ENCODE measurements at regions of chr7 and their contacts with region 1.

Region 1: DNA sequence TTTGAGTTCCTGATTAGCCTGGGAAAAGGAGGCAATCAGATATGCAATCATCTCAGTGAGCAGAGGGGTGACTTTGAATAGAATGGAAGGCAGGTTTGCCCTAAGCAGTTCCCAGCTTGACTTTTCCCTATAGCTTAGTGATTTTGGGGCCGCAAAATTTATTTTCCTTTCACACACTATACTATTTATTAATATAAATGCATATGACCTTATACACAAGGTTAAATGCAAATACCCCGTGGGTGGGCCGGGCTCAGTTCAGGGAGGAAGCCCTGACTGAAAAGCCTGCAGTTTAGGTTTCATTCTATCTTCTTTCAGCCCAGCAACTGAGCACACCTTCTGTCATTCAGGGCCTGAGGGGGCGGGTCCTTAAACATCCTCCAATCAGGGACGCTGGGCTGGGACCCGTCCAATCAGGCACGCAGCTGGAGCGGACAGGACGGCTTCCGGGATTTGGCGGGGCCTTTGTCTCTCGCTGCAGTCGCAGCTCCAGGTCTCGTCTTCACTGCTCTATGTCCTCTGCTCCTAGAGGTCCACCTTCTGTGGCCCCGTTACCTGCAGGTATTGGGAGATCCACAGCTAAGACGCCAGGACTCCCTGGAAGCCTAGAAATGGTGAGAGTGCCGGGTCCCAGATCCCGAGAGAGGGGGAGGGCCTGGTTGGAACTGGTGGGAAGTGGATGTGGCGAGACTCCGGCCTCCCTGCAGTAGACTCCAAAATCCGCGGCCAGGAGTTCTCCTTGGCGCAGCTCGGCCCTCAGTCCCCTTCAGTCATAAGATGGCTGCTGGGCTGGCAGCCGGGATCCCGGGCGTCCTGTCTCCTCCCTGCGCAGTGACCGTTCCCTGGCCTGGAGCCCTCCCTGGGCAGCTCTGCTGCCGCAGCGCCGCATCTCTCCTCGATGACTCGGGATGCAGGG is at the start of gene ZNF273:
- DNase-seq: peak; percentile 87
- H3K4me3 Mint-ChIP-seq: peak within 1 kb of the TSS; percentile 97
- H3K27ac Mint-ChIP-seq: peak within 1 kb of the TSS; percentile 93
- H3K4me1 Mint-ChIP-seq: peaks cover 26% of the 10 kb centered on the region
- H3K27me3 Mint-ChIP-seq: no peaks in the 10 kb centered on the region
- total RNA-seq, gene ZNF273: 7.2 and 7.5 TPM in 2 replicates

Region 2: DNA sequence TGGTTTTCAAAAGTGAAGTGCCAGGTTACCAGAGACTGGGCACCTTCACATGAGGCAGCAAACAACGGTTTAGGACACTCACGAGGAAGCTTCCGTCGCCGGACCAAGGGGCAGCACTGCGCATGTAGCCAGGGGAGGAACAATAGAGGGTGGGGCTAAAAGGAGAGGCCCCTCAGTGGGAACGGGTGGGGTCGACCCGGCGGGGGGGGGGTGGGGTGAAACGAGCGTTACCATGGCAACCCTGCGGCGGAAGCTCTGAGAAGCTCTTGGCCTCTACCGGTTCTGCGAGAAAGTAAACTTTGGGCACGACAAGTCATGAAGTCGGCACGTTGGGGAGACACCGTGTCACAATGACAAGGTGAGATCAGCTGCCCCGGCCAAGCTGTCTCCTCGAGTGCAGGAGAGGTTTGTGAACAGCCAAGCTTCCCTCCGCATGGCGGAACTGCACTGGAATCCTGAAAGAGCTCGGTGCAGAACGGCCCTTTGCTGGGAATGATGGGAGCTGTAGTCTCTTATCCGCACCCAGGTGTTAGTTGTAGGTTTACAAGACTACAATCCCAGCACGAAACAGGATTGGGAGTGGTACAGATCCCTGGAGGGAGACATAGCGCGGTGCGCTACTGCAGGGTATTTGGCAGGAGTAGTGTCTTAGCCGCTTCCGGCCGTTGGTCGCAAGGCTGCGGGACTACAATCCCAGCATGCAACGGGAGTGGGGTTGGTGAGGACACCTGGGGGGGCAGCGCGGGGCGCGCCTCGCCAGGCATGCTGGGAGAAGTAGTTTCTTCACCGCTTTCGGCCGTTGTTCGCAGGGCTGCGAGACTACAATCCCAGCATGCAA is 977.2 kb before region 1 on chr7:
- intact Hi-C with region 1: loop called (anchors 10 kb)
- DNase-seq: peak; percentile 78
- H3K4me3 Mint-ChIP-seq: peak overlapping the region; percentile 84
- H3K27ac Mint-ChIP-seq: peak overlapping the region; percentile 81
- H3K4me1 Mint-ChIP-seq: peaks cover 2% of the 10 kb centered on the region
- H3K27me3 Mint-ChIP-seq: no peaks in the 10 kb centered on the region

Region 3: DNA sequence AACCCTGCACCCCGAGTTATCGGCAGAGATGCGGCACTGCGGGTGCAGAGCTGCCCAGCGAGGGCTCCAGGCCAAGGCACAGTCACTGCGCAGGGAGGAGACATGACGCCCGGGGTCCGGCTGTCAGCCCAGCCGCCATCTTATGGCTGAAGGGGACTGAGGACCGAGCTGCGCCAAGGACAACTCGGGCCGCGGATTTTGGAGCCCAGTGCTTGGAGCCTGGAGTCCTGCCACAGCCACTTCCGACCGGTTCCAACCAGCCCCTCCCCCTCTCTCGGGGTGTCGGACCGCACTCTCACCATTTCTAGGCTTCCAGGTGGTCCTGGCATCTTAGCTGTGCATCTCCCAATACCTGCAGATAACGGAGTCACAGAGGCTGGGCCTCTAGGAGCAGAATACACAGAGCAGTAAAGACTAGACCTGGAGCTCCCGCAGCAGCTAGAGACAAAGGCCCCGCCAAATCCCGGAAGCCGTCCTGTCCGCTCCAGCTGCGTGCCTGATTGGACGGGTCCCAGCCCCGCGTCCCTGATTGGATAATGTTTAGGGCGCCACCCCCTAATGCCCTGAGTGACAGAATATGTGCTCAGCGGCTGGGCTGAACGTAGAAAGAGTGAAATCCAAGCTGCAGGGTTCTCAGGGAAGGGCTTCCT is 340.3 kb before region 1 on chr7 and contains the start of gene ZNF680:
- intact Hi-C with region 1: loop called (anchors 1 kb)
- DNase-seq: peak; percentile 87
- H3K4me3 Mint-ChIP-seq: peak within 1 kb of the TSS; percentile 98
- H3K27ac Mint-ChIP-seq: peak within 1 kb of the TSS; percentile 95
- H3K4me1 Mint-ChIP-seq: peaks cover 8% of the 10 kb centered on the region
- H3K27me3 Mint-ChIP-seq: peaks cover 2% of the 10 kb centered on the region
- total RNA-seq, gene ZNF680: 10.9 and 11.3 TPM in 2 replicates

Region 4: DNA sequence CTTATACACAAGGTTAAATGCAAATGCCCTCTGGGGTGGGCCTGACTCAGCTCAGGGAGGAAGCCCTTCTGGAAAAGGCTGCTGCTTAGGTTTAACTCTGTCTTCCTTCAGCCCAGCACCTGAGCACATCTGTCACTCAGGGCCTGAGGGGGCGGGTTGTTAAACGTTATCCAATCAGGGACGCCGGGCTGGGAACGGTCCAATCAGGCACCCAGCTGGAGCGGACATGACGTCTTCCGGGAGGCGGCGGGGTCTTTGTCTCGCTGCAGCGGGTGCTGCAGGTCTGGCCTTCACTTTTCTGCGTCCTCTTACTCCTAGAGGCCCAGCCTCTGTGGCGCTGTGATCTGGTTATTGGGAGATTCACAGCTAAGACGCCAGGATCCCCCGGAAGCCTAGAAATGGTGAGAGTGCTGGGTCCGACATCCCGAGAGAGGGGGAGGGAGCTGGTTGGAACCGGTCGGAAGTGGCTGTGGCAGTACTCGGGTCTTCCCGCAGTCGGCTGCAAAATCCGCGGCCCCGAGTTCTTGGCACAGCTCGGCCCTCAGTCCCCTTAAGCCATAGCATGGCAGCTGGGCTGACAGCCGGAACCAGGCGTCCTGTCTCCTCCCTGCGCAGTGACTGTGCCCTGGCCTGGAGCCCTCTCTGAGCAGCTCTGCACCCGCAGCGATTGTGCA is 108.8 kb before region 1 on chr7 and contains the start of gene ZNF138:
- intact Hi-C with region 1: loop called (anchors 2 kb)
- DNase-seq: peak; percentile 89
- H3K4me3 Mint-ChIP-seq: peak within 1 kb of the TSS; percentile 99
- H3K27ac Mint-ChIP-seq: peak within 1 kb of the TSS; percentile 97
- H3K4me1 Mint-ChIP-seq: peaks cover 11% of the 10 kb centered on the region
- H3K27me3 Mint-ChIP-seq: no peaks in the 10 kb centered on the region
- total RNA-seq, gene ZNF138: 7.9 and 8.1 TPM in 2 replicates

Region 5: DNA sequence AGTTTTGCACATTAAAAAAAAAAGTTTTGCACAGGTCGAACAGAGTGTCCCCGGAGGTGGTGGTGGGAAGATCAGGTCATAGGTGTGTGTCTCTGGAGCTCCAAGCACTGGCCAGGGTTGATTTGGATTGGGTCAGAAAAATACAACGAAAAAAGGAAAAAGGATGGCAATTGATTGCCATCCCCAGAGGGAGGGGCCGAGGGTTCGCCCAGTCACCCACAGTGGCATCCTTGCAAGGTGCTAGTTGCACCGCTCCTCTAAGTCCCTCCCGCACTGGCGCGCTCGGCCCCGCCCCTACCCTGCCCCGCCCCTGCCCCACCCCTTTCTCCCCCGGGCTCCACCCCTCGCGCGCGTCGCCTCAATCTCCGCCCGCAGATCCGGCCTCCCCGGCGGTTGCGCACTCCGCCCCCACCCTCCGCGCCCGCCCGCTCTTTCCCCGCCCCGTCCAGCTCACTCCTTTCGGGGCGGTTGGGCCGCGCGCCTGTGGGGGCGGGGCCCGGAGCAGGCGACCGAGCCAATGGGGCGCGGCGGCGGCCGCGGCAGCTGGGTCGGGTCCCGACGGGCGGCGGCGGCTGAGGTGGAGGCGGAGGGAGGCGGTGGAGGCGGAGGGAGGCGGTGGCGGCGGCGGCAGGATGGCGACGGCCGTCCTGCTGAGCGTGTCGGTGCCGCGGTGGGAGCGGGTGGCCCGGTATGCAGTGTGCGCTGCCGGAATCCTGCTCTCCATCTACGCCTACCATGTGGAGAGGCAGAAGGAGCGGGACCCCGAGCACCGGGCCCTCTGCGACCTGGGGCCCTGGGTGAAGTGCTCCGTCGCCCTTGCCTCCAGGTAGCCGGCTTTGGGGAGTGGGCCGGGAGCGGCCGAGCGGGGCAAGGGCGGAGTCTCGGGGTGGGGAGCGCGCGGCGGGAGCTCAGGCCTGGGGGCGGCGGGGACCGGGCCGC is 134.9 kb after region 1 on chr7:
- intact Hi-C with region 1: loop called (anchors 2 kb)
- DNase-seq: peak; percentile 85
- H3K4me3 Mint-ChIP-seq: peak overlapping the region; percentile 74
- H3K27ac Mint-ChIP-seq: peak overlapping the region; percentile 70
- H3K4me1 Mint-ChIP-seq: peaks cover 16% of the 10 kb centered on the region
- H3K27me3 Mint-ChIP-seq: no peaks in the 10 kb centered on the region

Region 6: GRCh38 chr7:66844552-66845378 is 1941.7 kb after region 1 on chr7:
- intact Hi-C with region 1: loop called (anchors 10 kb)
- DNase-seq: peak; percentile 99
- H3K4me3 Mint-ChIP-seq: peak overlapping the region; percentile 97
- H3K27ac Mint-ChIP-seq: peak overlapping the region; percentile 99
- H3K4me1 Mint-ChIP-seq: peaks cover 20% of the 10 kb centered on the region
- H3K27me3 Mint-ChIP-seq: no peaks in the 10 kb centered on the region